Ovary (tissue), 10 donors: ENCODE measurements at regions of chr18 and their contacts with region 1.

Region 1: GRCh38 chr18:65439188-65439587 is 311.6 kb upstream of the CDH7 start:
- DNase-seq: no peak
- H3K4me3 ChIP-seq: no peak overlapping the region
- H3K27ac ChIP-seq: no peak overlapping the region
- H3K4me1 ChIP-seq: no peaks in the 10 kb centered on the region
- H3K27me3 ChIP-seq: no peaks in the 10 kb centered on the region
- CTCF ChIP-seq: no peak
- EP300 ChIP-seq: no peak
- POLR2A ChIP-seq: no peak

Region 2: GRCh38 chr18:65398347-65399075 is 40.7 kb before region 1 on chr18:
- intact Hi-C with region 1: no loop called
- DNase-seq: no peak
- H3K4me3 ChIP-seq: no peak overlapping the region
- H3K27ac ChIP-seq: no peak overlapping the region
- H3K4me1 ChIP-seq: no peaks in the 10 kb centered on the region
- H3K27me3 ChIP-seq: no peaks in the 10 kb centered on the region
- CTCF ChIP-seq: no peak
- EP300 ChIP-seq: no peak
- POLR2A ChIP-seq: no peak

Region 3: GRCh38 chr18:65415020-65415566 is 24.1 kb before region 1 on chr18:
- intact Hi-C with region 1: loop called in 1 of 4 experiments (anchors 2 kb)
- DNase-seq: no peak
- H3K4me3 ChIP-seq: no peak overlapping the region
- H3K27ac ChIP-seq: no peak overlapping the region
- H3K4me1 ChIP-seq: no peaks in the 10 kb centered on the region
- H3K27me3 ChIP-seq: no peaks in the 10 kb centered on the region
- CTCF ChIP-seq: no peak
- EP300 ChIP-seq: no peak
- POLR2A ChIP-seq: no peak